Activated CD8-positive, alpha-beta T cell treated with anti-CD3 and anti-CD28 coated beads for 36 hours (primary cell): ENCODE measurements at regions of chr20 and their contacts with region 1.

Region 1: DNA sequence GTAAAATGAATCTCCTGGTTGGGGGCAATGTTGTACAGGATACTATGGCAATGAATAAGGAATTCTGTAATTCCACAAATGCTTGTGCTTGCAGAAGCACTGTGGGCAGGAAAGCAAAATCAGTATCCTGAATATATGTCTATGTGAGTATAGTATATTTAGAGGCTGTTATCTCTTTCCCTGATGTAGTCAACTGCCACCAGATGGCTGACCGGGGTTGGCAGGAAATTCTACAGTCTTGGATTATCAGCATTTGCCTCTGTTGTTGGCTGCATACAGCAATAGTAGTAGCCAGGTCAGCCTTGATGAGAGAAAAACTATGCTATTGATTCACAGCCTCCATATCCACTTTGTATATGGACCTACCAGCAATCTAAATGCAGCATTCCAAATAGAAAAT is 425.1 kb upstream of the JAG1 start:
- DNase-seq: no peak
- ATAC-seq: no peak
- H3K4me3 Mint-ChIP-seq: no peak overlapping the region
- H3K27ac Mint-ChIP-seq: no peak overlapping the region
- H3K4me1 Mint-ChIP-seq: no peaks in the 10 kb centered on the region
- H3K27me3 Mint-ChIP-seq: no peaks in the 10 kb centered on the region
- CTCF ChIP-seq: no peak

Region 2: DNA sequence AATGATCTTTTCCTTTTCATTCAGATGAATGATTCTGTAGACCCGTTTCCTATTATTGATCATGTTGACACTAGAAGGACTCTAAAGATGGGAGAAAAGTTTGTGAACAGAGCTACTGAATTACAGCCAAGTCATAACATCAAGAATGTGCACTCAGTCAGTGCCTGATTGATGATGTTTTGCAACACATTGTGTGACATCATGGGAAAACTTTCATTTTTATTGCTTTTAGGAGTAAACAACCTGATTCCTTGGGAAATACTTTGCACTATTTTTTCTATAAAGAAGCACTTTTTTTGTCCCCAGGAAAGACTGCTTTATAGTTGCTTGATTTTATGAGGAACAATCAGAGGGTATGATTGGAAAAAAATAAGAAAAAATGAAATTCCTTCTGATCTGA is 41.3 kb before region 1 on chr20:
- CTCF ChIA-PET with region 1: no interaction called
- POLR2A ChIA-PET with region 1: no interaction called
- intact Hi-C with region 1: no loop called
- DNase-seq: no peak
- ATAC-seq: no peak
- H3K4me3 Mint-ChIP-seq: no peak overlapping the region
- H3K27ac Mint-ChIP-seq: no peak overlapping the region
- H3K4me1 Mint-ChIP-seq: no peaks in the 10 kb centered on the region
- H3K27me3 Mint-ChIP-seq: no peaks in the 10 kb centered on the region
- CTCF ChIP-seq: no peak

Region 3: DNA sequence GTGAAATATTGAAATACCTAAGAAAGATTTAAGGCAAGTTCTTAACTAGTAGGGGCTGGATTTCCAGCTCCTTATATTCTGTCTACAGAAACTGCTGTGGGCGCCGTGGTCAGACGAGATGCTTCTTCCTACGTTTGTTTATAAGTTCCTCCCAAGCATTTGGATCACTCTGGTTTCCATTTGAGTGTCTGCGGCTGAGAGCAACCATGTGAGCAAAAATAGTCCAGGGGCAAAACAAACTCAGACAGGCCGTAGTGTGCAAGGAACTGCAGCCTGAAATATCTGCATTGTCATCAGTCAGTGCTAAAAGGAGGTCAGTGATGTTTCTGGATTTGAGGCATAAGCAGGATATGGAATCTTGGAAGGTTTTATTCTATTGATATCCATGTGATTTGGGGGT is 60.8 kb after region 1 on chr20:
- CTCF ChIA-PET with region 1: no interaction called
- POLR2A ChIA-PET with region 1: no interaction called
- intact Hi-C with region 1: loop called (anchors 10 kb)
- DNase-seq: no peak
- ATAC-seq: no peak
- H3K4me3 Mint-ChIP-seq: no peak overlapping the region
- H3K27ac Mint-ChIP-seq: no peak overlapping the region
- H3K4me1 Mint-ChIP-seq: no peaks in the 10 kb centered on the region
- H3K27me3 Mint-ChIP-seq: no peaks in the 10 kb centered on the region
- CTCF ChIP-seq: no peak

Region 4: GRCh38 chr20:11229772-11230171 is 130.9 kb after region 1 on chr20:
- CTCF ChIA-PET with region 1: no interaction called
- POLR2A ChIA-PET with region 1: no interaction called
- intact Hi-C with region 1: no loop called
- DNase-seq: no peak
- ATAC-seq: no peak
- H3K4me3 Mint-ChIP-seq: no peak overlapping the region
- H3K27ac Mint-ChIP-seq: no peak overlapping the region
- H3K4me1 Mint-ChIP-seq: no peaks in the 10 kb centered on the region
- H3K27me3 Mint-ChIP-seq: no peaks in the 10 kb centered on the region
- CTCF ChIP-seq: no peak

Region 5: DNA sequence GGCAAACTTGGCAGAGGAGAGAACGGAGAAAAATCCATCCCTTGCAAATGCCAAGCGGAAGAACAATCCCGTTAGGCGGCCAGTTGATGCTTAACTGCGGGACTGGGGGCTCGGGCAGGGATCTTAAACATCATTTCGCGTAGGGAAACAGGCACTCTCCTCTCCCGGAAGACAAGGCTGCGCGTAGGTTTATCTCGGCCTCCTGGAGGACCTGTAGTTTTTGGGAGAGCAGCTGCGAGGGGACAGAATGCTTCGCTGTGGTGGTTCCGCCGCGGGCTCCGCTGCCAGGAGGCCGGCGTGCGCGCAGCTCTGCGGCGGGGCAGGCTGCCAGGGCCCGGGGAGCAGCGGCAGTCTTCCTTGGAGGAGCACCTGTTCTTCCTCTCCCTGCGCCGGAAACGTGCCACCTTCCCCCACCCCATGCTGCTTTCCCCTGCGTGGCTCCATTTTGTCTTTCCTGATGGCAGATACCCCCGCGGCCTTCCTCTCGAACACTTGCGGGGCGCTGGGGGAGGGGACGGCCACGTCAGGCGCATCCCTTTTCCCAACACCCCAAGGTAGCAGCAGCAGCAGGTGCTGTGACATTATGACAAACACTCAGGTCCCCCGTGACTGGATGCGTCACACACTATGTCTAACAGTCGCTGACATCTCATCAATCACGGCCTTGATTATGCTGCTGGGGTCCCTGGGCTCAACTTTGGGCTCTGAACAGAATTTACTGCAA is 588.1 kb after region 1 on chr20:
- CTCF ChIA-PET with region 1: no interaction called
- POLR2A ChIA-PET with region 1: no interaction called
- intact Hi-C with region 1: no loop called
- DNase-seq: no peak
- ATAC-seq: no peak
- H3K4me3 Mint-ChIP-seq: no peak overlapping the region
- H3K27ac Mint-ChIP-seq: no peak overlapping the region
- H3K4me1 Mint-ChIP-seq: no peaks in the 10 kb centered on the region
- H3K27me3 Mint-ChIP-seq: peaks cover 11% of the 10 kb centered on the region
- CTCF ChIP-seq: no peak